ENCODE measurements at regions of chr11 and their contacts with region 1.

Region 1: GRCh38 chr11:74388678-74389327 is 9.4 kb downstream of the PGM2L1 start:
- DNase-seq: peak; percentile 81
- ATAC-seq: peak; percentile 81
- H3K4me3 Mint-ChIP-seq: no peak overlapping the region
- H3K27ac Mint-ChIP-seq: peak overlapping the region; percentile 75
- H3K4me1 Mint-ChIP-seq: peaks cover 41% of the 10 kb centered on the region
- H3K27me3 Mint-ChIP-seq: no peaks in the 10 kb centered on the region

Region 2: DNA sequence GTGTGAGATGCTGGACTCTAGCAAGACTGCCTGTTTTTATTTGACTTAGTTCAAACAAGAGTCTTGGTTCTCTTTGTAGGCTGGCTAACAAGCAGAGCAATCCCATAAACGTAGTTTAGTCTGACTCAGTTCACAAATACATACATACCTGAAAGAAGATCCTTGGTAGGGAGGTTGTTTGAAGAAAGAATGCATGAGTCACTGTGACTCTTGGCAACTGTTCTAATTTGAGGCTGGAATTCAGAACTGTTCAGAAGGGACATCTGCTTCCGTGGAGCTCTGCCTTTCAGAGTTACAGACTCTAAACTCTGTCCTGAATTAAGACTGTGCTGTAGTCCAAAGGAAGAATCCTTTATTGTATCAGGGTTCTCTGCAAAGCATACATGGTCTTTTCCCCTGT is 250.2 kb before region 1 on chr11:
- CTCF ChIA-PET with region 1: no interaction called
- POLR2A ChIA-PET with region 1: no interaction called
- intact Hi-C with region 1: no loop called
- DNase-seq: no peak
- ATAC-seq: no peak
- H3K4me3 Mint-ChIP-seq: no peak overlapping the region
- H3K27ac Mint-ChIP-seq: no peak overlapping the region
- H3K4me1 Mint-ChIP-seq: no peaks in the 10 kb centered on the region
- H3K27me3 Mint-ChIP-seq: no peaks in the 10 kb centered on the region

Region 3: DNA sequence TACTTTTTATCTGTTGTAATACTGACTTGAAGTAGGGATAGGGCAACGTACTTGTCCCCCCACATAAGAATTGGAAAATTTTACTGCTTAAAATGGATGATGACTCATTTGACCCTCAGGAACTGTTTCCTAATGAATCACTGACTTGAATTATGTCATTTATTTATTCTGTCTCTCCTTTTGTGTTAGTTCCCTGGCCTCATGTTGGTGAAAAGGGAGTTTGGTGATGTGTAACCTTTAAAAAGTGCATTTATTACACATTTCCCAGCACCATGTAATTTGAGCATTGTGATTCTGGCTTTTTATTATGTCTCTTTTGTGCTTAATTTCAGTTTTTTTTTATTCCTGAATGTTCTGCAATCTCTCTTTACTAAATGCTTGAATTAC is 29.7 kb after region 1 on chr11:
- CTCF ChIA-PET with region 1: interaction called, 5 read pairs
- POLR2A ChIA-PET with region 1: no interaction called
- intact Hi-C with region 1: loop called (anchors 1 to 2 kb)
- DNase-seq: no peak
- ATAC-seq: peak; percentile 65
- H3K4me3 Mint-ChIP-seq: no peak overlapping the region
- H3K27ac Mint-ChIP-seq: peak overlapping the region; percentile 61
- H3K4me1 Mint-ChIP-seq: peaks cover 32% of the 10 kb centered on the region
- H3K27me3 Mint-ChIP-seq: no peaks in the 10 kb centered on the region

Region 4: GRCh38 chr11:74443071-74443864 is 54.5 kb after region 1 on chr11:
- CTCF ChIA-PET with region 1: interaction called, 102 read pairs
- POLR2A ChIA-PET with region 1: interaction called, 3 read pairs
- intact Hi-C with region 1: no loop called
- DNase-seq: no peak
- ATAC-seq: no peak
- H3K4me3 Mint-ChIP-seq: no peak overlapping the region
- H3K27ac Mint-ChIP-seq: no peak overlapping the region
- H3K4me1 Mint-ChIP-seq: no peaks in the 10 kb centered on the region
- H3K27me3 Mint-ChIP-seq: no peaks in the 10 kb centered on the region

Region 5: GRCh38 chr11:74532501-74533246 is 143.9 kb after region 1 on chr11:
- CTCF ChIA-PET with region 1: no interaction called
- POLR2A ChIA-PET with region 1: no interaction called
- intact Hi-C with region 1: no loop called
- DNase-seq: no peak
- ATAC-seq: no peak
- H3K4me3 Mint-ChIP-seq: no peak overlapping the region
- H3K27ac Mint-ChIP-seq: no peak overlapping the region
- H3K4me1 Mint-ChIP-seq: no peaks in the 10 kb centered on the region
- H3K27me3 Mint-ChIP-seq: peaks cover 3% of the 10 kb centered on the region

Region 6: DNA sequence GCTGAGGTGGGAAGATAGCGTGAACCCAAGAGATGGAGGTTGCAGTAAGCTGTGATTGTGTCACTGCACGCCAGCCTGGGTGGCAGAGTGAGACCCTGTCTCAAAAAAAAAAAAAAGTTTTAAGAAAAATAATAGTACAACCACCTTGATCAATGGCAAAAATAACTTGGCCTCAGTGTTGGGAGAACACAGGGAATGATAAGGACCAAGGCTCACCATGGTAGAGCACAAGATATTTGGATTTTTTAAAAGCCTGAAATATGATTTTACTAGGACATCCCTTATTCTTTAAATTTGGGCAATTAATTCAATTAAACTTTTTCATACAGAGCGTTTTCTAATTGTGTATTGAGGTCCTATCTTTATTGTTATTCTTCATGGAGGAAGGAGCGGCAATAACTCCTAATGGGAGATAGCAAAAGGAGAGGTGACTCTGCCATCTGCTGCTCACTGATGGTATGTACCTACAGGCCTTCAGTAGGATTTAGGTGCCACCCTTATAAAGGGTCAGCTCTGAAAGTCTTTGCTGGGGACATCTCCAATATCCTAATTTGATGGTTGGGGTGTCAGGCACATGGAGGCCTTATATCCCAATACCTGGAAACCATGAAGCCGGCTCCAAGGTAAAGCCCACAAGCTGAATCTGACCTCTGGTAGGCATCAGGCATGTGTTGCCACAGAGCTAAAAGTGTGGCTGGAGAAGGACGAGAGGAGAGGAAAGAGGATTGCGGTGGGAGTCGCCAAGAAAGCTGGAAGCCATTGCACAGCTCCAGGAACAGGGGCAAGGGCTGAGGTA is 181.7 kb after region 1 on chr11:
- CTCF ChIA-PET with region 1: interaction called, 4 read pairs
- POLR2A ChIA-PET with region 1: no interaction called
- intact Hi-C with region 1: loop called in 1 of 2 experiments (anchors 1 kb)
- DNase-seq: peak; percentile 51
- ATAC-seq: peak; percentile 55
- H3K4me3 Mint-ChIP-seq: no peak overlapping the region
- H3K27ac Mint-ChIP-seq: no peak overlapping the region
- H3K4me1 Mint-ChIP-seq: no peaks in the 10 kb centered on the region
- H3K27me3 Mint-ChIP-seq: no peaks in the 10 kb centered on the region

Measured in activated CD4-positive, alpha-beta T cell treated with anti-CD3 and anti-CD28 coated beads for 36 hours (primary cell).